GM12878 (cell line): ENCODE measurements at regions of chrX and their contacts with region 1.

Region 1: DNA sequence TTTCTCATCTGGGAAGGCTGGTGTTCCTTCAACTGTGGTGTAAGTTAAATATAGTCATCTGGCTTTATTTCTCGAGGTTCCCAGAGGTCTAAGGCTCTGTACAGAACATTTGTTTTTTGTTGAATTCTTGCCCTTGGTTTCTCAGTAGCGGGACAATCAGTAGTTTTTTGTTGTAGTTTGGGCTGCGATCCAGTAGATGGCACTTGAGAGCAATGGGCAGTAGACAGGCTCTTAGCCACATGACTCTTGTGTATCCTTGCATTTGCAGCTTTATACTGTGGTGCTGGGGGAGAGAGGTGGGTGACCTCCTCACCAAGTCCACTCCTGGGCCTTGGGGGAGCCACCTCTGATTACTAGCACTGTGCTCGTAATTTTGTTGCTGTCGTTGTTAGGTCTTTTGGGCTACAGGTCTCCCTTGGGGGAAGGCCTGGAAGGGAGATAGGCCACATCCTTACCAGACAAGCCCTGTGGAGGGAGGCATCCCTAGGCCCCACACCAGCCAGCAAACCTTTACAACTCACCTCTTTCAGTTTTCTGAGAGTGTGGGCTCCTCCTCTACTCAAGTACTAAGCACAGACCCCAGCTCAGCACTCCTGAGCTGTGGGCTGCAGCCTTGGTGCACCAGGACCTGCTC is 8.1 kb downstream of the ETDB start:
- DNase-seq: no peak
- ATAC-seq: peak; percentile 81
- H3K4me3 ChIP-seq: no peak overlapping the region
- H3K27ac ChIP-seq: no peak overlapping the region
- H3K4me1 ChIP-seq: no peaks in the 10 kb centered on the region
- H3K27me3 ChIP-seq: no peaks in the 10 kb centered on the region
- CTCF ChIP-seq: peak; percentile 74 to 83 (median 78)
- EP300 ChIP-seq: no peak
- POLR2A ChIP-seq: no peak
- RAD21 ChIP-seq: peak; percentile 65

Region 2: GRCh38 chrX:135213200-135213844 is 101.1 kb after region 1 on chrX:
- CTCF ChIA-PET with region 1: interaction called, 7 read pairs
- POLR2A ChIA-PET with region 1: no interaction called
- RAD21 ChIA-PET with region 1: no interaction called
- SMC1A ChIA-PET with region 1: no interaction called
- in situ Hi-C with region 1: loop called (anchors 25 kb)
- intact Hi-C with region 1: no loop called
- DNase-seq: no peak
- ATAC-seq: peak; percentile 73
- H3K4me3 ChIP-seq: no peak overlapping the region
- H3K27ac ChIP-seq: no peak overlapping the region
- H3K4me1 ChIP-seq: no peaks in the 10 kb centered on the region
- H3K27me3 ChIP-seq: no peaks in the 10 kb centered on the region
- CTCF ChIP-seq: no peak
- EP300 ChIP-seq: no peak
- POLR2A ChIP-seq: no peak
- RAD21 ChIP-seq: no peak

Region 3: GRCh38 chrX:135396109-135396508 is 283.9 kb after region 1 on chrX:
- CTCF ChIA-PET with region 1: no interaction called
- POLR2A ChIA-PET with region 1: no interaction called
- RAD21 ChIA-PET with region 1: no interaction called
- SMC1A ChIA-PET with region 1: no interaction called
- in situ Hi-C with region 1: no loop called
- intact Hi-C with region 1: no loop called
- DNase-seq: no peak
- ATAC-seq: no peak
- H3K4me3 ChIP-seq: no peak overlapping the region
- H3K27ac ChIP-seq: no peak overlapping the region
- H3K4me1 ChIP-seq: no peaks in the 10 kb centered on the region
- H3K27me3 ChIP-seq: no peaks in the 10 kb centered on the region
- CTCF ChIP-seq: no peak
- EP300 ChIP-seq: no peak
- POLR2A ChIP-seq: no peak
- RAD21 ChIP-seq: no peak